HCT116 (cell line): ENCODE measurements at regions of chr18 and their contacts with region 1.

Region 1: DNA sequence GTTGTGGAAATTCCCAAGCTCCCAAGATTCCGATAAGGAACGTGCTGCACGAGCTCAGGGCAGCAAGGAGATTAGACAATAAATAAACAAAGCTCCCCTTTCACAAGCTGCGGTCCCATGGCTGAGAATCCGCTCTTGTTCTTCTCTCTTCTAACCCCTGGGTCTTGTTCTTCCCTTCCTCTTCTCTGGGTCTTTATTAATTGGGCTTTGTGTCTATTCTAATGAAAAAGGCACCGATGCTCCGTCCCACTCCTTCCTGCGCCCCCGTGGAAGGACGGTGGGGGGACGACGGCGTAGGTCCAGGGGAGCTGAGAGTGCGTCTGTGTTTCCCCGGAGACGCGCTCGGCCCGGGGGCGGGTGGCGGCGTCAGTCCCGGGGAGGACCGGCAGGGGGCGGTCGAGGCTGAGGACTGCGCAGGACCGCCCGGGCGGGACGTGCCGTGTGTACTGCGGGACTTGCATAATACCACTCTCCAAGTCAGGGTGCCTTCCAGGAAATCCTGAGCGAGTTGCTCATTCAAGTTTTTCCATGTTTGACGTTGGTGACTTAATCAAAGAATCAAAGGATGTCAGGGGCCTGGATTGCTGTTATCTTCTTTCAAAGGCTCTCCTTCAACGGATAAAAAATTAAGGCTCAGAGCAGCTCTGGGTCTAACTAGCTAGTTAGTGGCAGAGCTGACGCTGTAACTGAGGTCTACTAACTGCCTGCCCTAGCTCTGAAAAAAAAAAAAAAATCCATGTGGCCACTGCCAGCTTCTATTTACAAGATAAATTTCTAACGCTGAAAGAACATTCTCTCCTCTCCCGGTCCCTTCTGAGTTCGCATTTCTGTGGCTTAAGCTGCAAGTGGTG is 321.4 kb downstream of the TGIF1 start:
- DNase-seq: peak; percentile 41
- ATAC-seq: peak; percentile 99
- H3K4me3 ChIP-seq: peak overlapping the region; percentile 36 to 57
- H3K27ac ChIP-seq: no peak overlapping the region
- H3K4me1 ChIP-seq: peaks cover 0 to 11% of the 10 kb centered on the region in 2 experiments; a peak in 3 of 4 replicates
- H3K27me3 ChIP-seq: no peaks in the 10 kb centered on the region
- CTCF ChIP-seq: peak; percentile 54 to 94 (median 88)
- POLR2A ChIP-seq: no peak
- RAD21 ChIP-seq: peak; percentile 77

Region 2: GRCh38 chr18:3758531-3758930 is 12.8 kb before region 1 on chr18:
- CTCF ChIA-PET with region 1: interaction called, 10 read pairs
- POLR2A ChIA-PET with region 1: no interaction called
- RAD21 ChIA-PET with region 1: no interaction called
- intact Hi-C with region 1: no loop called
- DNase-seq: peak; percentile 6
- ATAC-seq: no peak
- H3K4me3 ChIP-seq: no peak overlapping the region
- H3K27ac ChIP-seq: no peak overlapping the region
- H3K4me1 ChIP-seq: no peaks in the 10 kb centered on the region
- H3K27me3 ChIP-seq: no peaks in the 10 kb centered on the region
- CTCF ChIP-seq: no peak
- POLR2A ChIP-seq: no peak
- RAD21 ChIP-seq: no peak

Region 3: DNA sequence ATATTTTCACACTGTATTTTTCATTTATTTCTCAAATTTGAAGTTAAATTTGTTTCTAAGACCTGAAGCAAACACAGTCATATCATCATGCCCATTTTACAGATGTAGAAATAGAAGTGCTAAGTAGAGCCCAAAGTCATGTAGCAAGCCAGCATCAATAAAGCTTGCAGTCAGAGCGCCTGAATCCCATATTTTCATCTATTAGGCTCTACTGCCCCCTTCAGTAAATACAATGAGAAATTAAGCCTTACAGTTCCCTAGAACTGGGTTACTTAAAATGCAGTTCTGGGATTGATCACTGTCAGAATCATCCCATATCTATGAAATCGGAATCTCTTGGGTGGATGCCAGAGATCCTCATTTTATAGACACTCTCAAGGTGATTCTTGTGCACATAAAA is 98.5 kb after region 1 on chr18:
- CTCF ChIA-PET with region 1: interaction called, 50 read pairs
- POLR2A ChIA-PET with region 1: interaction called, 5 read pairs
- RAD21 ChIA-PET with region 1: interaction called in 1 of 2 experiments, 5 read pairs
- intact Hi-C with region 1: loop called (anchors 5 kb)
- DNase-seq: peak; percentile 40
- ATAC-seq: peak; percentile 87
- H3K4me3 ChIP-seq: no peak overlapping the region
- H3K27ac ChIP-seq: no peak overlapping the region
- H3K4me1 ChIP-seq: no peaks in the 10 kb centered on the region
- H3K27me3 ChIP-seq: peaks cover 42% of the 10 kb centered on the region
- CTCF ChIP-seq: peak; percentile 31 to 59 (median 51); a peak in 4 of 6 replicates
- POLR2A ChIP-seq: no peak
- RAD21 ChIP-seq: peak; percentile 74

Region 4: GRCh38 chr18:3995476-3996102 is 224.2 kb after region 1 on chr18:
- CTCF ChIA-PET with region 1: interaction called, 28 read pairs
- POLR2A ChIA-PET with region 1: no interaction called
- RAD21 ChIA-PET with region 1: no interaction called
- intact Hi-C with region 1: loop called (anchors 2 kb)
- DNase-seq: peak; percentile 73
- ATAC-seq: peak; percentile 49; the same call in 1 of the 2 replicates
- H3K4me3 ChIP-seq: no peak overlapping the region
- H3K27ac ChIP-seq: no peak overlapping the region
- H3K4me1 ChIP-seq: peaks cover 0 to 3% of the 10 kb centered on the region in 2 experiments; a peak in 1 of 4 replicates
- H3K27me3 ChIP-seq: no peaks in the 10 kb centered on the region
- CTCF ChIP-seq: peak; percentile 58 to 85 (median 83); a peak in 5 of 6 replicates
- POLR2A ChIP-seq: no peak
- RAD21 ChIP-seq: peak; percentile 51

Region 5: DNA sequence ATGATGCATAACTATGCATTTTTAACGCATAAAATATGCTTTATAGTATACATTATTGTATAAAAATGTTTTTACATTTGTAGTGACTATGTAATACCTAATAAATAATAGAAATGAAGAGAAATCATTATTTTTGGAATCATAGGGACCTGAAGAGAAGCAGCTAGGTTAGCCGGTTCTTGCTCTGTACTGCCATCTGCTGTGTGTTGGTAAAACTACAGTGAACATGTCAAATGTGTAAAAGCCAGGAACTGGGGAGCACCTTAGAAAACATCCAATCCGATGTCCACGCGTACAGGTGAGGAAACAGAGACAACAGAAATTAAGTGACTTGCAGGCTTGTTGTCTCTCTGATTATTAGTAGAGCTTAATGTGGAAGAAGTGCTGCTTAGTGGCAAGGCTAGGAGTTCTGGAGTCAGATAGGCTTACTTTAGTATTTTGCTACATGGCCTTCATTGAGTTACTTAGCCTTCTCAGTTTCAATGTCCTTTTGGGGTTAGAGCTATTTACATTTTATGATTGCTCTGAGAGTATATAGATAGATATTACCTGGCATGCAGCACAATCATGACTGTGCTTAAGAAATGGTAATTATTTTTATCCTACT is 297.3 kb after region 1 on chr18:
- CTCF ChIA-PET with region 1: interaction called, 7 read pairs
- POLR2A ChIA-PET with region 1: no interaction called
- RAD21 ChIA-PET with region 1: no interaction called
- intact Hi-C with region 1: loop called (anchors 5 kb)
- DNase-seq: peak; percentile 51
- ATAC-seq: peak; percentile 85
- H3K4me3 ChIP-seq: no peak overlapping the region
- H3K27ac ChIP-seq: no peak overlapping the region
- H3K4me1 ChIP-seq: no peaks in the 10 kb centered on the region
- H3K27me3 ChIP-seq: no peaks in the 10 kb centered on the region
- CTCF ChIP-seq: peak; percentile 31 to 77 (median 72); a peak in 5 of 6 replicates
- POLR2A ChIP-seq: no peak
- RAD21 ChIP-seq: peak; percentile 55